Activated CD8-positive, alpha-beta T cell treated with anti-CD3 and anti-CD28 coated beads for 36 hours (primary cell): ENCODE measurements at regions of chr17 and their contacts with region 1.

Region 1: DNA sequence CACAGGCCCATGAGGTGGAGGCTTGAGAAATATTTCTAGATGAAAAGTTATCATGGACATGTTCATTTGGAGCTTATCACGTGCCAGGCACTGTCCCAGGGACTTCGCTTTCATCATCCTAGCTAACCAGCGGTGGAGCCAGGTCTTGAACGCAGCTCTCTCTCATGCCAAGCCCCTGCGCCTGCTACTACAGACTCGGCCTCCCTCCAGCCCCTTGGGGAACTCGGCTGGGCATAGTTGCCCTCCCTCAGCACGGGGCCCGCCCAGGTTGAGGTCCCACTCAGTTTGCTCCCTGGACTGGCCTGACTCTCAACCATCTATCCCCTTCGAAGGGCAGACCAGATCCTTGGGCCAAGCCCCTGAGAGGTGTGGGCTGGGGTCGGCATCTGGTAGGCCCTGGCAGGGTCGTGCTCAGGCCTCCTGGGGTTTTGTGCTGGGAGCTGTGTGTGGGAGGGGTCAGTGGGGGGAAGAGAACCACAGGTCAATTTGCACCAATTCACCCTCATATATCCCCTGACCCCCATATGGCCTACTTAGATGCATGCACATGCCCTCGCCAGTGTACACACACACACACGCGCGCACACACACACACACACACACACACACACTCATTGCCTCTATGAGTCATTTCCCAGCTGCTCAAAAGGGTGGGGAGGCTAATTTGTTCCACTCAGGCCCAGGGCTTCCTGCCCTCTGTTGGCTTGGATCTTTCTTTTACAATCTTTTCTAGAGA is 12.1 kb upstream of the SCN4A start:
- DNase-seq: peak; percentile 92
- ATAC-seq: peak; percentile 97
- H3K4me3 Mint-ChIP-seq: no peak overlapping the region
- H3K27ac Mint-ChIP-seq: peak overlapping the region; percentile 87
- H3K4me1 Mint-ChIP-seq: peaks cover 27% of the 10 kb centered on the region
- H3K27me3 Mint-ChIP-seq: no peaks in the 10 kb centered on the region
- CTCF ChIP-seq: no peak

Region 2: DNA sequence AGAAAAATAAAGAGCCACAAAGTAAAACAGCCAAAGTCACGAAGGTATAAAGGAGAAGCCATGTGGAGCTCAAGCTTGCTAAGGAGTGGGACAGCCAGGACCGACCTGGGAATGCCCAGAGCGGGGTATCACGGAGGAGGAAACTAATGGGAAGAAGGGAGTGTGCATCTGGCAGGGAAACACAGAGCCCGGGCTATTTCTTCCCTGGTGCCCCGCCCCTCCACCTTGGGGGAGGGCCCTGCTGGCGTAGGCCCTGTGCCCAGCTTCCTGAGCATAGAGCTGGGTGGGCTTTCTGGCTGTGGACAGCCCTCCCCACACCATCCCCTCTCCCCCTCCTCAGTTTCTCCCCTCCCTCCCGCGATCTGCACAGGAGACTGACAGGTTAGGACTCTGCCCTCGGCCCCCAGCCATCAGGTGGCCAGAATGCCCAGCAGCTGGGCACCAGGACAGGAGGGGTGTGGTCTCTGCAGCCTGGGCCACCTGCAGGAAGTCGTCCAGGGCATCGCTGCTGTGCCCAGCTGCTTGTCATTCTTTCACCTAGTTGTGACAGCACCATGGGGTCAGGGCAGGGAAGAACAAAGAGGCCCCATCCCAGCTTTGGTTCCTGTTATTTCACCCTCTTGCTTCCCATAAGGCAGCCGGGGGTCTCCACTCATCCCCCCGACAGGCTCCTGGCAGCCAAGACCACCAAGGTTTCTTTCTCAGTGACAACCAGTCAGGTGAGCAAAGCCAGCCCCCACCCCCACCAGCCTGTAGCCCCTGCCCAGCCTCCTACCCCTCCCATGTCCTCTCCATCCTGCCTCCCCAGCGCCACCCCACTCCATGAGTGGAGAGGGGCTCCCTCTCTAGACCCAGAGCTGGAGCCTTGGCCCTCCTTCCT is 441.6 kb before region 1 on chr17:
- CTCF ChIA-PET with region 1: no interaction called
- POLR2A ChIA-PET with region 1: no interaction called
- intact Hi-C with region 1: no loop called
- DNase-seq: no peak
- ATAC-seq: no peak
- H3K4me3 Mint-ChIP-seq: no peak overlapping the region
- H3K27ac Mint-ChIP-seq: no peak overlapping the region
- H3K4me1 Mint-ChIP-seq: peaks cover 3% of the 10 kb centered on the region
- H3K27me3 Mint-ChIP-seq: peaks cover 20% of the 10 kb centered on the region
- CTCF ChIP-seq: no peak

Region 3: GRCh38 chr17:63931099-63931561 is 53.7 kb before region 1 on chr17:
- CTCF ChIA-PET with region 1: interaction called, 22 read pairs
- POLR2A ChIA-PET with region 1: no interaction called
- intact Hi-C with region 1: no loop called
- DNase-seq: peak; percentile 80
- ATAC-seq: peak; percentile 71
- H3K4me3 Mint-ChIP-seq: peak overlapping the region; percentile 96
- H3K27ac Mint-ChIP-seq: peak overlapping the region; percentile 91
- H3K4me1 Mint-ChIP-seq: peaks cover 15% of the 10 kb centered on the region
- H3K27me3 Mint-ChIP-seq: no peaks in the 10 kb centered on the region
- CTCF ChIP-seq: no peak

Region 4: GRCh38 chr17:64183815-64184214 is 199.0 kb after region 1 on chr17:
- CTCF ChIA-PET with region 1: no interaction called
- POLR2A ChIA-PET with region 1: no interaction called
- intact Hi-C with region 1: no loop called
- DNase-seq: peak; percentile 64
- ATAC-seq: peak; percentile 80
- H3K4me3 Mint-ChIP-seq: no peak overlapping the region
- H3K27ac Mint-ChIP-seq: no peak overlapping the region
- H3K4me1 Mint-ChIP-seq: peaks cover 10% of the 10 kb centered on the region
- H3K27me3 Mint-ChIP-seq: no peaks in the 10 kb centered on the region
- CTCF ChIP-seq: no peak